ENCODE measurements at regions of chr3 and their contacts with region 1.

Region 1: DNA sequence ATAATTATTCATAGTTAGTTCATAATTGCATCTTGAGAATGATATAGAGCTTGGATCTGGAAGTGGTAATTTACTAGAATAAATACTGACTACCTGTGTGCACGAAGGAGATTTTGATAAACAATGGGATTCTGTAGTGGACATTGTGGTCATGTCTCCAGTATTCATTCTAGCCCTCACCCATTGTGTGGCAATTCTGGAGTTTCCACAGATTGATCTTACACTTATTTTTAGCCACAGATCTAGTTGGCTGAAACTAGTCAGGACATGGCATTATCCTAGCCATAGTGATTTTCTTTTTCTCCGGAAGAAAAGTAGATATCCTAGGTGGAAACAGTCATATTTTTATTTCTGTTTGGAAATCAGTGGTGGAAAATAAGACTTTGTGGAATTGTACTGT is 833.1 kb downstream of the NAALADL2 start:
- DNase-seq: no peak
- H3K4me3 Mint-ChIP-seq: no peak overlapping the region
- H3K27ac Mint-ChIP-seq: no peak overlapping the region
- H3K4me1 Mint-ChIP-seq: no peaks in the 10 kb centered on the region
- H3K27me3 Mint-ChIP-seq: no peaks in the 10 kb centered on the region
- CTCF ChIP-seq: no peak

Region 2: GRCh38 chr3:175267121-175267531 is 425.1 kb before region 1 on chr3:
- CTCF ChIA-PET with region 1: no interaction called
- intact Hi-C with region 1: loop called (anchors 5 kb)
- DNase-seq: no peak
- H3K4me3 Mint-ChIP-seq: no peak overlapping the region
- H3K27ac Mint-ChIP-seq: peak overlapping the region; percentile 14
- H3K4me1 Mint-ChIP-seq: peaks cover 8% of the 10 kb centered on the region
- H3K27me3 Mint-ChIP-seq: no peaks in the 10 kb centered on the region
- CTCF ChIP-seq: no peak

Measured in Calu3 (cell line).